ENCODE measurements at regions of chr19 and their contacts with region 1.

Region 1: DNA sequence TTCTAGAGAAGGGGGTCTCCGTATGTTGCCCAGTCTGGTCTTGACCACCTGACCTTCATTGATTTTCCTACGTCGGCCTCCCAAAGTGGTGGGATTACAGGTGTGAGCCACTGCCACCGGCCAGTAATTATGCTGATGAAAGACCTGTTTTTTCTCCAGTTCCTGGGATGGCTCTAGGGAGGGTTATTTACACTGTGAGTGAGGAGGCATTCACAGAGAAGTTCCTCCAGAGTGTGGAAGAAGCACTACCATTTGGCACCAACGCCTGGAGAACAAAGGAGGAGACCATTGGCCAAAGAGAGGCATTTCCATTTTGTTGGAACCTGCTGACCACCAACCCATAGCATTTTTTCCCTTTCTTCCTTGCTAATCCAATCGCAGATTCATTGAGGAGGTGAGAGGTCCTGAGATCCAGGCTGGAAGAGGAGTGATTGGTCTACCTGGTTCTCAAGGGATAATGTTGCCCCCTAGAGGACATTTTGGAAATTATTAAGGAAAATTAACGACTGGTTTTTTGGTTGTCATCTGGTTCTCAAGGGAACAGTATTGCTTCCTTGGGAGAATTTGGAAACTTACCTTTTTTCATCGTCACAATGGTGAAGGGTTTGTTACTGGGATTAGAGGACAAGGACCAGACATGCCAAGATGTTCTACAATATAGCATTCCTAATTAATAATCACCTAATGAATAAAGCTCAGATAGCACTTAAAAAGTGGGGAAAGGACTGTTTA is 5.5 kb upstream of the SAE1 start:
- DNase-seq: no peak
- H3K4me3 Mint-ChIP-seq: no peak overlapping the region
- H3K27ac Mint-ChIP-seq: no peak overlapping the region
- H3K4me1 Mint-ChIP-seq: peaks cover 4% of the 10 kb centered on the region
- H3K27me3 Mint-ChIP-seq: peaks cover 5% of the 10 kb centered on the region

Region 2: DNA sequence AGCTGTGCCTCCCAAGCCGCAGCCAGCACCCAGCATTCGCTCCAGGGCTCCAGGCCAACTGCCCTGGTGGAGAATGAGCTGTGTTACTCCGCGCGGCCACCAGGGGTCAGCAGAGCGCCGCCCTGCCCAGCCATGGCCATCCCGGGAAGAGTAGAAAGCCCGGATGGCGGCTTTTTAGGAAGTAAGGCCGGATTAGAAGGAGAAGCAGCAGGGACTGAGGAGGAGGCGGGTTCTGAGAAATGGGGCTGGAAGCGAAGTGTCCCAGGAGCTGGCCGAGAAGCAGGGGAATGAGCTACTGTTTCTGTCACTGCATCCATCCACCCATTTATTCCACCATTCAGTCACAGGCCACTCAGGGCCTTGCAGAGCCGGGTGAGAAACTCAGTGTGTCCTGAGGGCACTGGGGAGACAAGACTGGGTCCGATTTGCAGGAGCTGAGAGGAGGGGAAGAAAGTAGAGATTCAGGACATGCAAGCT is 112.0 kb before region 1 on chr19:
- intact Hi-C with region 1: loop called (anchors 1 kb)
- DNase-seq: peak; percentile 54
- H3K4me3 Mint-ChIP-seq: no peak overlapping the region
- H3K27ac Mint-ChIP-seq: no peak overlapping the region
- H3K4me1 Mint-ChIP-seq: peaks cover 11% of the 10 kb centered on the region
- H3K27me3 Mint-ChIP-seq: peaks cover 23% of the 10 kb centered on the region

Region 3: DNA sequence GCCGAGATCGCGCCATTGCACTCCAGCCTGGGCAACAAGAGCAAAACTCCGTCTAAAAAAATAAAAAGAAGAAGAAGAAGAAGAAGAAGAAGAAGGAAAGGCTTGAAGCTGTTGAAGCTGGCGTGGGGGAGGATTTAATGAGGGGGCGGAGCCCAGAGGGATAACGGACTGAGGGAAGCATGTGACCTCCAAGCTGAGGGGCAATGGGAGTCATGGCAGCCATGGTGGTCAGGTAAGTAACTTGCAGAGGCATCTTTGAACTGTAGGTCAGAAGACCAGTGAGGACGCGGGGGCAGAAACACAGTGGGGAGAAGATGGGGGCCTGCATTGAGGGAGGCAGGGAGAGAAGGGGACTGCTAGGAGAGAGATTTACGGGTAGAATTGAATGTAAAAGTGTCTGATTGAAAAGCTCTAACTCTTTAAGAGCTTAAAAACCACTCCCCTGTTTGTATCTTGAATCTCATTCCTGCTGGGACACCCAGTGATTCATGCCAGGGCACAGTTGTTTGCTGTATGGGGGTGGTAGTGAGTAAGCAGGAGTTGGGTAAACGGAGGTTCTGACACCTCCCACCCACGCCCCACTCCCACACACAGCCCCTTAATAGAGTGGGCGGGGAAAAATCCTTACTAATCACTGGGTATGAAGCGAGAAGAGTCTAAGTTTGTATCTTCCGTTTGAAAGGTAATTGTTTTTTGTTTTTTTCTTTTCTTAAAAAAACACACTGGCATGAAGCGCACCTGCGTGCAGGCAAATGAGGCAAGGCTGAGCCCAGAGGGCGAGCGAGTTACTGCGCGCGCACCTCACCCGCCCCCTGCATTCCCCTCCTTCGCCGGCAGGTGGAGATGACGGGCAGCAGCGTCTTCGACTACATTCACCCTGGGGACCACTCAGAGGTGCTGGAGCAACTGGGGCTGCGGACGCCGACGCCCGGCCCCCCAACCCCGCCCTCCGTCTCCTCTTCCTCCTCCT is 89.7 kb before region 1 on chr19:
- intact Hi-C with region 1: loop called (anchors 1 kb)
- DNase-seq: peak; percentile 93
- H3K4me3 Mint-ChIP-seq: peak overlapping the region; percentile 86
- H3K27ac Mint-ChIP-seq: peak overlapping the region; percentile 92
- H3K4me1 Mint-ChIP-seq: peaks cover 24% of the 10 kb centered on the region
- H3K27me3 Mint-ChIP-seq: peaks cover 14% of the 10 kb centered on the region

Region 4: DNA sequence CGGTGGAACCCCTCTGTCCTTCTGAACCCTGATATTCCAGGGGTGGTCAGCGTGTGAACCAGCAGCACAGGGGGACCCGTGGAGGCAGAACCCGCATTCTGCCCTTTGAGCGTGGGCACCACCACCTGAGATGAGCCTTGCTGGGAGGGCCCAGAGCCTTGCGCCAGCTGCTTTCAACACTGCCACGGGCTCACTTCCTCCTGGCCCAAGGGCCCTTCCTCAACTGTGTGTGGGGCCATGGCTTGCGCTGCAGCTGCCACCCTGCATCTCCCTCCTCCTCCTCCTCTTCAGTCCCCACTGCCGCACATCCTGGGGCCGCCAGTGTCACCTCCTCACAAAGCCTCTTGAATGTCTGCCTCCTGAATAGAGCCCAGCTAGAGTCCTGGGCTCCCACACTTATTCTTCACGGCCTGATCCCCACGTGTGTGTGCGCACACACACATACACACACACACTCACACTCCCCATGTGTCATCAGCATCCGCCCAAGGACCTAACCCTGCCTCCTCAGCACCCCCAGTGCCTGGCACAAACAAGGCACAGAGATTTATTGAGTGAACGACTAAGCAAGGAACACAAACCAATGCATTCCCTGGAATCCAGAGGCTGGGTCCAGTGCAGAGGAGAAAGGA is 49.8 kb before region 1 on chr19:
- intact Hi-C with region 1: loop called (anchors 1 kb)
- DNase-seq: no peak
- H3K4me3 Mint-ChIP-seq: no peak overlapping the region
- H3K27ac Mint-ChIP-seq: peak overlapping the region; percentile 5
- H3K4me1 Mint-ChIP-seq: peaks cover 16% of the 10 kb centered on the region
- H3K27me3 Mint-ChIP-seq: no peaks in the 10 kb centered on the region

Region 5: DNA sequence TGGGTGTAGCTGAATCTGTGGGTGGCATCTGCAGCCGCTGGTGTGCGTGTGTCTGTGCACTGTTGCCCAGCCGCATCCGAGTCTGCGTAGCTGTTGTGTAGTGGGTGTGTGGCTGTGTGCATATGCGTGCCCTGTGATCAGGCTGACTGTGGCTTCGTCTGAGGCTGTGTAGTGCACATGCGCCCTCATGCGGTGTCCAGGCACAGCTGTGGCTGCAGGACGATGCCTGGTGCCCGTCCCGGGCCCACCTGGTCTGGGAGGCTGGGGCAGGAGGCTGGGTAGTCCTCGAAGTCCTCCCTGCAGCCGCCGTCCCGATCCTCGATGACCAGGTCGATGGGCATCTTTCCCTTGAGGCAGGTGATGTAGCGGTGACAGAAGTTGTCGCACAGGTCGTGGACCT is 289.4 kb after region 1 on chr19:
- intact Hi-C with region 1: no loop called
- DNase-seq: no peak
- H3K4me3 Mint-ChIP-seq: no peak overlapping the region
- H3K27ac Mint-ChIP-seq: no peak overlapping the region
- H3K4me1 Mint-ChIP-seq: peaks cover 11% of the 10 kb centered on the region
- H3K27me3 Mint-ChIP-seq: peaks cover 42% of the 10 kb centered on the region